ENCODE measurements at regions of chr2 and their contacts with region 1.

Region 1: GRCh38 chr2:43158259-43158880 is 68.0 kb downstream of the ZFP36L2 start:
- DNase-seq: peak; percentile 58
- H3K4me3 Mint-ChIP-seq: peak overlapping the region; percentile 74
- H3K27ac Mint-ChIP-seq: peak overlapping the region; percentile 99
- H3K4me1 Mint-ChIP-seq: peaks cover 39% of the 10 kb centered on the region
- H3K27me3 Mint-ChIP-seq: no peaks in the 10 kb centered on the region

Region 2: DNA sequence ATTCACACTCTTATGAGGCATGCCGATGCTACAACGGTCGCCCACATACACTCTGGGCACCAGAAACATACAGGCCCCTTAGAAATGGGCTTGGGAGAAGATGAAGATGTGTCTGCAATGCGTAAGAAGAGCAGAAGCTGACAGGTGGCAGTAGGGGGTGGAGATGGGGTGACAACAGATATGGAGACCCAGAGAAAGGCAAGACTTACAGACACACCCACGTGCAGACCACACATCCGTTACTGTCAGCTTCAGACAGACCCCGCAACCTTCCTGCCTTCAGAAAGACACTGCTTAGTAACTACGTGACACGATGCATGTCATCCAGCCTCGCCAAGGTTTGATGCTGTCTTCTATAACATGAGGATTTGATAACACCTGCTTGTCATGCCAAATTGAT is 21.5 kb before region 1 on chr2:
- intact Hi-C with region 1: loop called (anchors 1 kb)
- DNase-seq: peak; percentile 81
- H3K4me3 Mint-ChIP-seq: peak overlapping the region; percentile 58
- H3K27ac Mint-ChIP-seq: peak overlapping the region; percentile 94
- H3K4me1 Mint-ChIP-seq: peaks cover 71% of the 10 kb centered on the region
- H3K27me3 Mint-ChIP-seq: no peaks in the 10 kb centered on the region

Region 3: GRCh38 chr2:43142921-43143438 is 15.4 kb before region 1 on chr2:
- intact Hi-C with region 1: loop called (anchors 1 kb)
- DNase-seq: peak; percentile 55
- H3K4me3 Mint-ChIP-seq: peak overlapping the region; percentile 80
- H3K27ac Mint-ChIP-seq: peak overlapping the region; percentile 71
- H3K4me1 Mint-ChIP-seq: peaks cover 49% of the 10 kb centered on the region
- H3K27me3 Mint-ChIP-seq: no peaks in the 10 kb centered on the region

Region 4: DNA sequence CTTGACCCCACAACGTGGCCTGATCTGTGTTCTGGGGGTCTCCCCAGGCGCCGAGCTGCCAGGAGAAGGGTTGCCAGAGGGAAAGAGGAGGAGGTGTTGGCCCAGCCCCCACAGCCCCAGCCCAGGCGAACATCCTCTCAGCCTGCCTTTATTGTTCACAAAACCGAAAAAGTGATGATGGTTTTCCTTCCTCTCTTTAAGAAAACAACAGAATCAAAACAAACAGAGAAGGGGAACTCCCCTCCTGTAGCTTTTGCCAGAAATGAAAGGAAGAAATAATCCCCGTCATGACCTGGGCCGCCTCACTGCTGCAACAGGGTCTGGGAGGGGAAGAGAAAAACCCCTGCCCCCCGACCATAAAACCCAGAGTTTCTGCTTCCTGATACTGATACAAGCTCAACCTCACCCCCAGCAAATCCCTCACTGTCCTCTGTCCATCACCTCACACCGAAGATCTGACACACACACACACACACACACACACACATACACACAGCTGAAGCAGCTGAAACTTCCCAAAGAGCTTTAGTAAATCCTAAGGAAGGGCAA is 16.1 kb after region 1 on chr2:
- intact Hi-C with region 1: loop called (anchors 1 kb)
- DNase-seq: peak; percentile 73
- H3K4me3 Mint-ChIP-seq: peak overlapping the region; percentile 38
- H3K27ac Mint-ChIP-seq: peak overlapping the region; percentile 91
- H3K4me1 Mint-ChIP-seq: peaks cover 69% of the 10 kb centered on the region
- H3K27me3 Mint-ChIP-seq: no peaks in the 10 kb centered on the region

Region 5: GRCh38 chr2:43219383-43220228 is 61.2 kb after region 1 on chr2:
- intact Hi-C with region 1: loop called (anchors 1 kb)
- DNase-seq: peak; percentile 82
- H3K4me3 Mint-ChIP-seq: peak overlapping the region; percentile 82
- H3K27ac Mint-ChIP-seq: peak overlapping the region; percentile 94
- H3K4me1 Mint-ChIP-seq: peaks cover 35% of the 10 kb centered on the region
- H3K27me3 Mint-ChIP-seq: no peaks in the 10 kb centered on the region